GM12878 (cell line): ENCODE measurements at regions of chr17 and their contacts with region 1.

Region 1: DNA sequence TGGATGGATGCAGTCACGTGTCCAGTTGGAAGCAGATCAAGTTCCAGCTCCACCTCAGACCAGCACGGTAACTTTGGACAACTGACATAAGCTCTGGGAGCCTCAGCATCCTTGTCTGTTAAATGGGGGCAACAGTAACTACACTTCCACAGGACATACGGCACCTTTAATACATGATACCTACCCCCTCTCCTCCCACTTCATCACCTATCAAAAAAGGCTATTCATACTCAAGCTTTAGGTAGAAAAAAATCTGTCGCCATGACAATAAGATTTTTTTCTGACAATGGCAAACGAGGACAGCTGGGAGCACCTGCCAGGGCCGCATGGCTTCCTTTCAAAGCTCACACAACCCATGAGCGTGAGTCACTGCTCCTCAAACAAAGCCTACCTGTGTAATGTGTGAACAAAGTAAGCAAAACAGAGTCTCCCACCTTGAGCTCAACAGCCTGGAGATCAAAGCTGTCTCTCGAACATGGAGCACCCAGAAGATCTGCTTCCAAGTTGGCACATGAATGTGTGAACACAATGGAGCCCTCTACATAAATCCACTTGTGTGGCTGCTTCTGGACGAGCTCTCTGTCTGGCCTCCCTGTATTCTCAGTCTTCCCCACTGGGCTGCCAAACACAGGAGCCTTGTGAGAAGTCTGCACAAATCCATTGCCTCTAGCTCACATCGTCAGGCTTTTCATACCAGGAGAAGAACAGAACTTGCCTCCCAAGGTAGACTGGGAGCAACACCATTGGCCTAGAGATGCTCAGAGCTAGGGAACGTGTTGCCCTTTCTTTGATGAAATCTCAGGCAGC is 459.7 kb downstream of the SOX9 start:
- DNase-seq: no peak
- ATAC-seq: peak; percentile 19; the same call in 1 of the 3 replicates
- H3K4me3 ChIP-seq: no peak overlapping the region
- H3K27ac ChIP-seq: no peak overlapping the region
- H3K4me1 ChIP-seq: no peaks in the 10 kb centered on the region
- H3K27me3 ChIP-seq: 0 out of 4 replicates have a peak, but pooled peaks cover 0 to 2% of the 10 kb centered on the region in 2 experiments
- CTCF ChIP-seq: no peak
- EP300 ChIP-seq: no peak
- POLR2A ChIP-seq: no peak
- RAD21 ChIP-seq: no peak

Region 2: GRCh38 chr17:72569148-72569946 is 11.2 kb before region 1 on chr17:
- CTCF ChIA-PET with region 1: interaction called, 4 read pairs
- POLR2A ChIA-PET with region 1: interaction called, 3 read pairs
- RAD21 ChIA-PET with region 1: no interaction called
- SMC1A ChIA-PET with region 1: interaction called, 11 read pairs
- in situ Hi-C with region 1: no loop called
- intact Hi-C with region 1: no loop called
- DNase-seq: no peak
- ATAC-seq: peak; percentile 12; the same call in 1 of the 3 replicates
- H3K4me3 ChIP-seq: no peak overlapping the region
- H3K27ac ChIP-seq: no peak overlapping the region
- H3K4me1 ChIP-seq: no peaks in the 10 kb centered on the region
- H3K27me3 ChIP-seq: no peaks in the 10 kb centered on the region; a peak in 1 of 4 replicates
- CTCF ChIP-seq: no peak
- EP300 ChIP-seq: no peak
- POLR2A ChIP-seq: no peak
- RAD21 ChIP-seq: no peak